Heart right ventricle (tissue), 16 donors: ENCODE measurements at regions of chr1 and their contacts with region 1.

Region 1: DNA sequence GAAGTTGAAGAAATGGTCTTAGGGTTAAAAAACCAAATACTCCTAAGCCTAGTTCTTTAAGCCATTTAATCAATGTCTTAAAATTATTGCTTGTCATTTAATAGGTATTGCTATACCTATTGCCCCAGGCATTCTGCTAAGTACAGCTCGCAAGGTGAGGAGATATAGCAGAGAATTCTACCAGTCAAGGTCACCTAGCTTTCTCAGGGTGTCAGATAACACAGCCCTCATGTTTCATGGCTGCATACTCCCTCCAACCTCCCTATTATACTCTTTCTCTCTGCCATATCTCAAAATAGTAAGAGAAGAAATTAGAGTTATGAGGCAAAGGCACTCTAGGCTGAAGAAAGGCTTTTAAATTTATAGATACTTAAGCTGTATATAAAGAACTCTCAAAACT is 68.4 kb upstream of the GPR88 start:
- DNase-seq: no peak
- ATAC-seq: peak in 2 of 8 donors; percentile 35 to 52
- H3K4me3 ChIP-seq: no peak overlapping the region
- H3K27ac ChIP-seq: no peak overlapping the region
- H3K4me1 ChIP-seq: peaks cover 0 to 3% (median 0%) of the 10 kb centered on the region in 9 donors
- H3K27me3 ChIP-seq: no peaks in the 10 kb centered on the region
- CTCF ChIP-seq: no peak

Region 2: DNA sequence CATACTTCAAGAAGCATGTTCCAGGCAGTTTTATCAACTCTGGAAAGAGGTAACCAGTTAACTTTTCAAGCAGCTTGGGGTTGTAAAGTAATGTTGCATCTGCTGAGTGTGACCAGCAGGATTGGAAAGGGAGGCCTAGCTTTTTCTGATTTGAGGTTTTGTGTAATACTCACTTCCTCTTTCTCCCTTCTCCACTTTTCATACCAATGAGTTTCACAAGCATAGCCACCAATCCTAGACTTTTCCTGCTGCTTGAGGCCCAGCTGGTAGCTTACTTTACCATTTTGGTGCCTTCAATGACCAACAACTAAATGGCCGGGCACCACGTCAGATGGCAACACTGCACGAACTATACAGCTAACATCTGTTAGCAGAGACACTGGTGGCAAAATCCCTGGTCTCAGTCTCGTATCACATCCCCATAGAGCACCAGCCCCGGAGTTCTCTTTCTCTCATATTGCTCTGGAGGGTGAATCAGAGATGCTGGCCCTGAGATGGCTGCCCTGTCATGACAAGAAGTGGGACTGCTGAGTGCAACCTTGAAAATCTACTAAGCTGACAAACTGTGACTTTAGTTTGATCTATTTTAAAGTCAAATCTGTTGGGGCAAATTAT is 53.6 kb after region 1 on chr1:
- intact Hi-C with region 1: loop called in 1 of 10 experiments (anchors 5 kb)
- DNase-seq: no peak
- ATAC-seq: peak in 2 of 8 donors; percentile 29 to 40
- H3K4me3 ChIP-seq: no peak overlapping the region
- H3K27ac ChIP-seq: no peak overlapping the region
- H3K4me1 ChIP-seq: peaks cover 0 to 10% (median 0%) of the 10 kb centered on the region in 9 donors
- H3K27me3 ChIP-seq: no peaks in the 10 kb centered on the region
- CTCF ChIP-seq: no peak